ENCODE measurements at regions of chr15 and their contacts with region 1.

Region 1: DNA sequence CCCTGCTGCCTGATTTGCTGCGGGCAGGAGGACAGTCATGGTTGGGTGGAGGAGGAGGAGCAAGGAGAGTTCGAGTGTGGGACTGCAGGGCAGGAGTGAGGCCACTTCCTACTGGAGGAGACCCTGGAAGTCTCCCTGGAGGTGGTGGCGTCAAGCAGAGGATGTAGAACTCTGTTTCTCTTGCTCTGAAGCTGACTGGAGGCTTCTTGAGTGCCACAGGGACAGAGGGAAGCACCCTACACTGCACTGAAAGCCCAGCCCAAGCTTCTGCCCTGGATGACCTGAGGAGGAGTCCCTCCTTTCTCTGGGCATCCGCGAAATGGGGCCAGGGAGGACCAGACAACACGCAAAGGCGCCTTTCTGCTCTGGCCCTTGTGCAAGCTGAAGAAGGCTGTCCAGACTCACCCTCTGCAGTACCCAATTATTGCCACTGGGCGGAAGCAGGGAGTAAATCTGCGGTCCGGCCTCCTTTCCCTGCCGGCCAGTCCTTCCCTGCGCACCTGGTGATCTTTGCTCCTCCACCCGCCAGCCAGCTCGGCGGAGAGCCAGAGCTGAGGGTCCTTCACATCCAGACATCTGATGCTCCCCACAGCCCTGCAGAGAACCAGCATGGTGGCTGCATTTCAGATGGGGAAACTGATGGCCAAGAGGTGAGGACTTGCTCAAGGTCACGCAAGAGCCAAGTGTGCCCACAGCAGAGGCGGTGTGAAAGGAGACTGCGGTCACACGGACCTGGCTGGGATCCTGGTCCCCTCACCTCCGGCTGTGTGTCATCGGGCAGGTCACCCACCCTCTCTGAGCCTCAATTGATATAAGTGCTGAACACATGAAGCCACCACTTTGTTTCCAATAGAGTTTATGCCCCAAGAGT is 207.1 kb downstream of the TBC1D2B start:
- DNase-seq: peak in 1 of 2 donors; percentile 82
- H3K4me3 ChIP-seq: no peak overlapping the region
- H3K27ac ChIP-seq: no peak overlapping the region
- H3K4me1 ChIP-seq: peaks cover 0 to 7% of the 10 kb centered on the region in 2 donors
- H3K27me3 ChIP-seq: no peaks in the 10 kb centered on the region
- CTCF ChIP-seq: peak; percentile 82 to 95 (median 94)

Region 2: GRCh38 chr15:77901974-77902750 is 31.7 kb after region 1 on chr15:
- intact Hi-C with region 1: loop called (anchors 1 kb)
- DNase-seq: peak in 1 of 2 donors; percentile 30
- H3K4me3 ChIP-seq: no peak overlapping the region
- H3K27ac ChIP-seq: no peak overlapping the region
- H3K4me1 ChIP-seq: no peaks in the 10 kb centered on the region
- H3K27me3 ChIP-seq: no peaks in the 10 kb centered on the region
- CTCF ChIP-seq: no peak